Natural killer cell (primary cell): ENCODE measurements at regions of chr6 and their contacts with region 1.

Region 1: GRCh38 chr6:150068720-150069648 is at the start of gene ULBP3:
- DNase-seq: peak; percentile 35 to 78
- ATAC-seq: peak; percentile 76 to 87 (median 80)
- H3K4me3 ChIP-seq: peak within 1 kb of the TSS; percentile 58
- H3K4me3 Mint-ChIP-seq: peak within 1 kb of the TSS; percentile 95
- H3K27ac ChIP-seq: no peak within 1 kb of the TSS
- H3K27ac Mint-ChIP-seq: peak within 1 kb of the TSS in 1 of 2 donors; percentile 60
- H3K4me1 ChIP-seq: peaks cover 27% of the 10 kb centered on the region
- H3K4me1 Mint-ChIP-seq: peaks cover 17 to 38% of the 10 kb centered on the region in 2 donors
- H3K27me3 ChIP-seq: peaks cover 4% of the 10 kb centered on the region
- H3K27me3 Mint-ChIP-seq: peaks cover 6 to 14% of the 10 kb centered on the region in 2 donors
- CTCF ChIP-seq: peak; percentile 19
- total RNA-seq, gene ULBP3: 0.64 to 1.5 (median 0.75) TPM

Region 2: DNA sequence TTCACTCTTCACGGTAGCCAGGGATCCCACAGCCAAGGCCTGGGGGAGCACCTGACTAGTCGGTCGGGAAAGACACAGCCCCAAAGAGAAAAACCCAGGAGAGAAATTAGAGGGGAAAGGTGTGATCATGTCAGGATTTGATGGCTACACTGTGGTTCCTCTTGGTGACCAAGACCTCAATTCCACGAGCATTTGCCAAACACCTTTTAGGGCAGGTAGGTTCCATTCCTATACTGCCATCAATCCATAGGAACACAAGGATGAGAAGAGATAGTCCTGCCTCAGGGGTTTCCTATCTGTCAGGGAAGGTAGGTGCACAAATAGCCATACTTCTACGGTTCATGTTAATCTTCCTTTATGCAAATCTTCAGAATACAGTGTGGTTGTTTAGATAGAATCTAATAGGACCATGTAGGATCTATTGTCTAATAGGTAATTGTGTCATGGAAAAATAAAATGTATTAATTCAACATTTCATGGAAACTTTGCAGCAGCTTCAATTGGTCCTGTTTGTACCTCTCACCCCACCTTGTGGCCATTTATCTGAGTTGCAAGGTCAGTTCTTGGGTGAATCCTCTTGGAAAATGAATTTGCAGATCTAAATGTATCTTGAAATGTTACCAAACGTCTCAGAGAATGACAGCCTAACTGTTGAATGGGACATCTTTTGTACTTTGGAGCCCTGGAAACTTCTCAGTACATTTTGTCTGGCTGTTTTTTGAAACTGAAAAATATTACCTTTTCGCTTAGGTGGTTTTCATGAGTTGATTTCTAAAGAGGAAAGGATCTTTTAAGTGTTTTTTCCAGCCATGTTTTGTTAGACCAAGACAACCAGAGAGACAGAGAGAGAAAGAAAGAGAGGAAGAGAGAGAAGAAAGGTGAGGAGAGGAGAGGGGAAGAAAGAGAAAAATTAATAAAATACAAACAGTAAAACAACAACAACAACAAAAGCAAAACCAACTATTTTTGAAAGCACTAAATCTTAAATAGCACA is 266.1 kb after region 1 on chr6:
- intact Hi-C with region 1: loop called (anchors 5 kb)
- DNase-seq: peak in 1 of 2 donors; percentile 68
- ATAC-seq: peak in 1 of 3 donors; percentile 36
- H3K4me3 ChIP-seq: no peak overlapping the region
- H3K4me3 Mint-ChIP-seq: no peak overlapping the region
- H3K27ac ChIP-seq: no peak overlapping the region
- H3K27ac Mint-ChIP-seq: no peak overlapping the region
- H3K4me1 ChIP-seq: no peaks in the 10 kb centered on the region
- H3K4me1 Mint-ChIP-seq: no peaks in the 10 kb centered on the region
- H3K27me3 ChIP-seq: no peaks in the 10 kb centered on the region
- H3K27me3 Mint-ChIP-seq: peaks cover 6 to 14% of the 10 kb centered on the region in 2 donors
- CTCF ChIP-seq: peak; percentile 65

Region 3: DNA sequence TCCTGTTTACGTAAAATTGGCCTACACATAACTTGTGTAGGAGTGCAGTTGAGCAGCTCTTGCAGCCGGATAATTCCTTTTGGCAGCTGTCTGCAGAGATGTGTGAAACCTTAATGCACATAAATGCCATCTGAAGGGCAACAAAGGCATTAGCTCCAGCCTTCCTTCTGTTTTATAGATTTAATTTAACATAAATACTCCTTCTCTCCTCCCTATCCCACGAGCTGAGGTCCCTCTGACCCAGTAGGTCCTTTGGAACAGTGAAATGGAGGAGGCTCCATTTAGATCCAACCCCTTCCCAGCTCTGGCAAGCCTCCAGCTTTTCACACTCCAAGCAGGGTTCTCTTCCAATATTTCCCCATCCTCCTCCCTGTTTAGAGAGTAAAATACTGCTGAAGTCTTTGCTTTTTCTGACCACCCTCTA is 537.2 kb after region 1 on chr6:
- intact Hi-C with region 1: no loop called
- DNase-seq: no peak
- ATAC-seq: no peak
- H3K4me3 ChIP-seq: no peak overlapping the region
- H3K4me3 Mint-ChIP-seq: no peak overlapping the region
- H3K27ac ChIP-seq: no peak overlapping the region
- H3K27ac Mint-ChIP-seq: no peak overlapping the region
- H3K4me1 ChIP-seq: peaks cover 1% of the 10 kb centered on the region
- H3K4me1 Mint-ChIP-seq: no peaks in the 10 kb centered on the region
- H3K27me3 ChIP-seq: peaks cover 5% of the 10 kb centered on the region
- H3K27me3 Mint-ChIP-seq: peaks cover 41 to 61% of the 10 kb centered on the region in 2 donors
- CTCF ChIP-seq: no peak